Right cardiac atrium (tissue), 5 donors: ENCODE measurements at regions of chr16 and their contacts with region 1.

Region 1: DNA sequence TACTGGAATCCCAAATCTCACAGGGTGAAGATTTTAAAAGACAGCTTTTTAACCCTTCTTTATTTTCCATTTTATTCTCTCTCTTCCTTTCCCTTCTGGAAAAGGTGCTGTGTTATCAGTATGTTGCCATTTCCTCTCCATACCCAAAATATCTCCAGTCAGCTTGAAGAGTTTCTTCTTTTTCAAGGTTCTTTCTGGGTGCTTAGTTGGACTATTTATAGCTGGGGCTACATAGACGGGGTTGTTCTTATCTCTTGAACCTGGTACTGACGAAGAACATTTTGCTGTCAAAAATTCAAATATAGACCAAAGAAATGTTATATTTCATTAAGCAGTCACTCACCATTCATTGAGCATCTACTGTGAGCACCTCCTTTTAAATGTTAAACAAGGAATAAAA is 48.6 kb downstream of the IST1 start:
- DNase-seq: no peak
- ATAC-seq: no peak
- H3K4me3 ChIP-seq: no peak overlapping the region
- H3K27ac ChIP-seq: no peak overlapping the region
- H3K4me1 ChIP-seq: no peaks in the 10 kb centered on the region
- H3K27me3 ChIP-seq: no peaks in the 10 kb centered on the region

Region 2: DNA sequence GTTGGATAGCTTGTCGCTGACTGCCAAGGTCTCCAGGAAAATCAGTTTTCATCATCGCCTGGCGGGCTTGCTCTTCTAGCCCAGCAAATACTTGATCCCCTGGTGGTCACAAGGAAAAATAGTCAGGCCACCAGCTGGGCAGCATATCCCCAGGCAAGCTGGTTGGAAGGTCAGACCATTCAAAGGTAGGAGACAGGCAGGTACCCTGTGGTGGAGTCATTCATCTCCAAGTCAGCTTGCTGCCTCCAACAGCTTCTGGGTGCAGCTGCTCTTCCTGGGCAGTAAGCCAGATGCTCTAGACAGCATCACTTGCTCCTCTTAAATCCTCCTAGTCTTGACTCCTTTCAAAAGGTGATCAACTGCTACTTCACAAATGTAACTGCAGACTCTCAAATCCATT is 75.9 kb before region 1 on chr16:
- intact Hi-C with region 1: no loop called
- DNase-seq: no peak
- ATAC-seq: no peak
- H3K4me3 ChIP-seq: no peak overlapping the region
- H3K27ac ChIP-seq: no peak overlapping the region
- H3K4me1 ChIP-seq: no peaks in the 10 kb centered on the region
- H3K27me3 ChIP-seq: no peaks in the 10 kb centered on the region

Region 3: DNA sequence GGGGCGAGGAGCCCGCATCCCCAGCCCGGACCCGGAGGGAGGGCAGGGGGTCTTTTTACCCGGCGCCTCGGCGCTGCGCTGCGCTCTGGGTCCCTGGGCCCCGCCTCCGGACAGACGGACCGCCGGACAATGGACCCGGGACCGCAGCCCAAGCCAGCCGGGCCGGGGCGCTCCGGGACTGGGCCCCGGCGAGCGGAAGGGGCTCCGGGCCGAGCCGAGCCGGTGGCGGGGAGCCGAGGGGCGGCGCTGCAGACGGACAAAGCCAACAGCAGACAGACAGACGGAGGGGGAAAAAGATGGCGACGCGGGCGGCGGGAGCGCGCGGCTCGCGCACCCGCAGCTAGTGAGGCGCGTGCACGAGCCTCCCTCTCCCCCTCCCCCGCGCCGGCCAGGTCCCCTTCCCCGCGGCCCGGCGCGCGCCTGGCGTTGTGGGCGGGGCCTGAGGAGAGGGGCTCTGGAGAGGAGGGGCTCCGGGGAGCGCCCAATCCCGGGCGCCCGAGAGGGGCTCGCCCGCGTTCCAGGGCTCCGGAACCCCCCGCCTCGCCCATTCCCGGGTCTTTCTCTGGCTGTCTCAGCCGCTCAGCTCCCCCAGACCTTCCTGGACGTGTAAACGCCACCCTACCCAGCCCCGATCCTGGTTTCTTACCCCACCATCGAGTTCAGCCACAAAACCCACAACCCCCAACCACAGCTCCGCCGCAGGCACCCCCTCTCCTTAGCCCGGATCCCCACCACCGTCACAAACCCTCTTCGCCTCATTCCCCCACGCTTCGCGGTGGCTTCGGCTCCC is 59.8 kb before region 1 on chr16 and contains the start of gene ZNF821:
- intact Hi-C with region 1: loop called in 1 of 4 experiments (anchors 10 kb)
- DNase-seq: peak; percentile 83 to 93 (median 93)
- ATAC-seq: peak; percentile 94 to 96
- H3K4me3 ChIP-seq: peak within 1 kb of the TSS; percentile 70
- H3K27ac ChIP-seq: peak within 1 kb of the TSS; percentile 89
- H3K4me1 ChIP-seq: no peaks in the 10 kb centered on the region
- H3K27me3 ChIP-seq: no peaks in the 10 kb centered on the region
- total RNA-seq, gene ZNF821: 6.3 to 8.5 (median 6.9) TPM